Heart left ventricle (tissue), 16 donors: ENCODE measurements at regions of chr2 and their contacts with region 1.

Region 1: GRCh38 chr2:20578895-20579825 is 71.7 kb downstream of the HS1BP3 start:
- DNase-seq: peak; percentile 78 to 95 (median 90)
- ATAC-seq: peak; percentile 88 to 92 (median 92)
- H3K4me3 ChIP-seq: peak overlapping the region in 1 of 12 donors; percentile 1
- H3K27ac ChIP-seq: peak overlapping the region; percentile 57 to 94 (median 86)
- H3K4me1 ChIP-seq: peaks cover 13 to 82% (median 63%) of the 10 kb centered on the region in 12 donors
- H3K27me3 ChIP-seq: no peaks in the 10 kb centered on the region
- CTCF ChIP-seq: no peak
- POLR2A ChIP-seq: peak in 1 of 2 donors; percentile 8

Region 2: GRCh38 chr2:20595431-20596192 is 16.5 kb after region 1 on chr2:
- intact Hi-C with region 1: loop called in 2 of 10 experiments (anchors 1 to 2 kb)
- DNase-seq: peak in 3 of 5 donors; percentile 35 to 56 (median 36)
- ATAC-seq: peak in 1 of 4 donors; percentile 4
- H3K4me3 ChIP-seq: no peak overlapping the region
- H3K27ac ChIP-seq: peak overlapping the region; percentile 66 to 92 (median 79)
- H3K4me1 ChIP-seq: peaks cover 13 to 90% (median 63%) of the 10 kb centered on the region in 12 donors
- H3K27me3 ChIP-seq: no peaks in the 10 kb centered on the region
- CTCF ChIP-seq: no peak
- POLR2A ChIP-seq: peak in 1 of 2 donors; percentile 16

Region 3: DNA sequence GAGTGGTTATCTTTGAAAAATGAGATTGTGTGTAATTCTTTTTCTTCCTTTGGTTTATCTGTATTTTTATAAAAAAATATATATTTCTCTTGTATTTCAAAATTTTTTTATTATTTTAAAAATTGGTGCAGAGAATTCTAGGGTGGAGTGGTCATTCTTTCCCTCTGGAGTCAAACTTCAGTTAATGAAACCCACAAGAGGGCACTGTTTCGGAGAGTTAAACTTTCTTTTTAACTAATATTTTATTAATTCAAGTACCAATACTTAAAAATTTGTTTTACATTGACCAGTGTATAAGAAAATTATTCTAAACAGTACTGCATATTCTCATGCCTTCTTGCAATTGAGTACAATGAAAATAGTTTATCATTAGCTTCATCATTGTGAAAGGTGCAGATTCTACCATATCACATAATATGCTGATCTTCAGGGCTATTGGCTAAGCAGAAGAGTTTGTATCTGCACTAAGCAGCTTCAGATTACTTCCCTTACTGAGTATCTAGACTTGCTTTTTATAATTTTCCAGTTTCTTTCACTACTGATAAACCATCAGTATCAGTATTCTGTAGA is 21.7 kb after region 1 on chr2:
- intact Hi-C with region 1: loop called in 2 of 10 experiments (anchors 1 to 2 kb)
- DNase-seq: no peak
- ATAC-seq: no peak
- H3K4me3 ChIP-seq: no peak overlapping the region
- H3K27ac ChIP-seq: peak overlapping the region in 10 of 12 donors; percentile 23 to 92 (median 80)
- H3K4me1 ChIP-seq: peaks cover 13 to 73% (median 55%) of the 10 kb centered on the region in 12 donors
- H3K27me3 ChIP-seq: no peaks in the 10 kb centered on the region
- CTCF ChIP-seq: peak; percentile 22 to 64 (median 48)
- POLR2A ChIP-seq: no peak

Region 4: GRCh38 chr2:20617892-20618467 is 38.8 kb after region 1 on chr2:
- intact Hi-C with region 1: loop called in 4 of 10 experiments (anchors 2 to 10 kb)
- DNase-seq: peak; percentile 96 to 99 (median 98)
- ATAC-seq: peak; percentile 79 to 84 (median 82)
- H3K4me3 ChIP-seq: peak overlapping the region in 1 of 12 donors; percentile 5
- H3K27ac ChIP-seq: peak overlapping the region; percentile 86 to 99 (median 95)
- H3K4me1 ChIP-seq: peaks cover 43 to 97% (median 85%) of the 10 kb centered on the region in 12 donors
- H3K27me3 ChIP-seq: no peaks in the 10 kb centered on the region
- CTCF ChIP-seq: peak; percentile 15 to 75 (median 52)
- POLR2A ChIP-seq: peak in 1 of 2 donors; percentile 48

Region 5: GRCh38 chr2:20625491-20626391 is 46.6 kb after region 1 on chr2:
- intact Hi-C with region 1: loop called in 2 of 10 experiments (anchors 5 to 10 kb)
- DNase-seq: peak in 4 of 5 donors; percentile 60 to 81 (median 72)
- ATAC-seq: peak; percentile 19 to 71 (median 52)
- H3K4me3 ChIP-seq: no peak overlapping the region
- H3K27ac ChIP-seq: peak overlapping the region; percentile 54 to 99 (median 84)
- H3K4me1 ChIP-seq: peaks cover 0 to 68% (median 49%) of the 10 kb centered on the region in 12 donors
- H3K27me3 ChIP-seq: no peaks in the 10 kb centered on the region
- CTCF ChIP-seq: peak in 8 of 12 donors; percentile 10 to 40 (median 32)
- POLR2A ChIP-seq: no peak